HepG2 (cell line): ENCODE measurements at regions of chr13 and their contacts with region 1.

Region 1: DNA sequence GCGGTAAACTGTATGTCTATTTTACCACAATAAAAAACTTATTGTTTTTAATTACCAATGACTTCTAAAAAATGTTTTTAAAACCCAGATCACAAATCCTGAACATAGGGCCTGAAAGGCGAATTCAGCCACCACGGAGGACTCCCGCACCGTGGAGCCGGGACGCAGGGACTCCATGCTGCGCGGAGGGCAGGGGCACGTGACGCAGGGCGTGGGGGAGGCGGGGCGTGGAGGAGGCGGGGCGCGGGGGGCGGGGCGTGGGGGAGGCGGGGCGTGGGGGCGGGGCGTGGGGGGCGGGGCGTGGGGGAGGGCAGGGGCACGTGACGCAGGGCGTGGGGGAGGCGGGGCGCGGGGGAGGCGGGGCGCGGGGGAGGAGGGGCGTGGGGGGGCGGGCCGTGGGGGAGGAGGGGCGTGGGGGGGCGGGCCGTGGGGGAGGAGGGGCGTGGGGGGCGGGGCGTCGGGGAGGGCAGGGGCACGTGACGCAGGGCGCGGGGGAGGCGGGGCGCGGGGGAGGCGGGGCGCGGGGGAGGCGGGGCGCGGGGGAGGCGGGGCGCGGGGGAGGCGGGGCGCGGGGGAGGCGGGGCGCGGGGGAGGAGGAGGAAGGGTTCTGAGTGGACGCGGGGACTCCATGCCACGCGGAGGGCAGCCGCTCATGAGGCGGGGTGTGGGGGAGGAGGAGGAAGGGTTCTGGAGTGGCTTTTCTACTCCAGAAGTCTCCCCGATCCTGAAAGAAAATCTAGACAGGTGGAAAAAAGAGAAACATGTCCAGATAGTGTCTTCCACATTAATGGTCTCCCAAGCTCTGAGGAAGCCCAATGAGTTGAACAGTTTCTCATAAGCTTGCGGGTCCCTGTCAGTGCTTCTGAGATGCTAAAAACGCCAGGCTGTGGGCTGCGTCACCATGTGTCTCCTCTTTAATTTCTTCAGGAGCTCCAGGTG is 4.4 kb upstream of the PROZ start:
- DNase-seq: peak; percentile 49
- ATAC-seq: peak; percentile 30; the same call in 2 of the 3 replicates
- H3K4me3 ChIP-seq: peak overlapping the region; percentile 69 to 81 (median 76)
- H3K27ac ChIP-seq: peak overlapping the region; percentile 92
- H3K4me1 ChIP-seq: peaks cover 92% of the 10 kb centered on the region
- H3K27me3 ChIP-seq: no peaks in the 10 kb centered on the region
- CTCF ChIP-seq: no peak
- EP300 ChIP-seq: no peak
- POLR2A ChIP-seq: peak in 1 of 2 experiments; percentile 88; a peak in 2 of 4 replicates
- RAD21 ChIP-seq: no peak

Region 2: DNA sequence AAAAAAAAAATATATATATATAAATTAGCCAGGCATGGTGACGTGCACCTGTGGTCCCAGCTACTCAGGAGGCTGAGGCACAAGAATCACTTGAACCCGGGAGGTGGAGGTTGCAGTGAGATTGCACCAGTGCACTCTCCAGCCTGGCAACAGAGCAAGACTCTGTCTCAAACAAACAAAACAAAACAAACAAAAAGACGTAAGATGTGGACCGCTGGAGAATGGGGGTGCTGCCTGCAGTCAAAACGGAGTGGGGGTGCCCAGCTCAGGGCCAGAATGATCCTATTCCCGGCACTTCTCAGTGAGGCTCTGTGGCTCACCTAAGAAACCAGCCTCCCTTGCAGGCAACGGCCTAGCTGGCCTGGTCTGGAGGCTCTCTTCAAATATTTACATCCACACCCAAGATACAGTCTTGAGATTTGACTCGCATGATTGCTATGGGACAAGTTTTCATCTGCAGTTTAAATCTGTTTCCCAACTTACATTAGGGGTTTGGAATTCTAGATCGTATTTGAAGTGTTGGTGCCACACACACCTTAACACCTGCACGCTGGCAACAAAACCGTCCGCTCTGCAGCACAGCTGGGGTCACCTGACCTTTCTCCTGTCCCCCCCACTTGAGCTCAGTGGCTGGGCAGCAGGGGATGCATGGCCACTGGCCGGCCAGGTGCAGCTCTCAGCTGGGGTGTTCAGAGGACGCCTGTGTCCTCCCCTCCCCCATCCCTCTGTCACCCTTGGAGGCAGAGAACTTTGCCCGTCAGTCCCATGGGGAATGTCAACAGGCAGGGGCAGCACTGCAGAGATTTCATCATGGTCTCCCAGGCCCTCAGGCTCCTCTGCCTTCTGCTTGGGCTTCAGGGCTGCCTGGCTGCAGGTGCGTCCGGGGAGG is 48.8 kb before region 1 on chr13 and contains the start of gene F7:
- CTCF ChIA-PET with region 1: no interaction called
- POLR2A ChIA-PET with region 1: interaction called, 11 read pairs
- in situ Hi-C with region 1: no loop called
- intact Hi-C with region 1: no loop called
- DNase-seq: peak; percentile 91
- ATAC-seq: peak; percentile 88
- H3K4me3 ChIP-seq: peak within 1 kb of the TSS; percentile 60 to 76 (median 75)
- H3K27ac ChIP-seq: peak within 1 kb of the TSS; percentile 98
- H3K4me1 ChIP-seq: peaks cover 39% of the 10 kb centered on the region
- H3K27me3 ChIP-seq: no peaks in the 10 kb centered on the region
- CTCF ChIP-seq: peak; percentile 43
- EP300 ChIP-seq: peak; percentile 85; a peak in 3 of 4 replicates
- POLR2A ChIP-seq: peak; percentile 74 to 79
- RAD21 ChIP-seq: peak; percentile 54; the same call in 1 of the 2 replicates
- total RNA-seq, gene F7: 7.2 and 12.6 TPM in 2 replicates

Region 3: DNA sequence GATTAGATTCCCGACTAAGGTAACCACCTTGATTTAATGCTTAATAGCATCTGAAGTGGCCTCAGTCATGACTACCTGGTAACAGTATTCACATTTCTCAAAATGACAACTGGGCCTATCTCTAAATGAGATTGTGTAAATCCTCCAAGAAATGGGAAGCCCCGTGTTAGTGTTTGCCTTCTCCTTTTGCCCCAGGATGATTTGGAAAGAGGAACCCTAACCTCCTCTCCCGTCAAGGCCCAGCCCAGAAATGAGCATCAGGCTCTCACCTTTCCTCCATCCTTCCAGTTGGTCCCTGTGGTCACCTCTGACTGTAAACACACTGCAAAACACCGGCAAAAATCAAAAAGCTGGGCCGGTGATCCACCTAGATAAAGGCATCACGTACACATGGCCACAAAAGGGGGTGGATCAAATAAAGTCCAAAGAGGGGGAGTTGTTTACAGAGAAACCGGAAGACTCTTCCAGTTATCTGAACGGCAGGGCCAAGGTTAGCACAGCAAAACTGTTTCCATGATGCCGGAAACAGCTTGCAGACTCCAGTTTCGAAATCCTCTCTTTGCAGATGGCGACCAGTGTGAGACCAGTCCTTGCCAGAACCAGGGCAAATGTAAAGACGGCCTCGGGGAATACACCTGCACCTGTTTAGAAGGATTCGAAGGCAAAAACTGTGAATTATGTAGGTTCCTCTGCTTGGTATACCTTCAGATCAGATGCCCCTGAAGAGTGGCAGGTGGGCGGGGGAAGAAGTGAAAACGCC is 15.1 kb before region 1 on chr13:
- CTCF ChIA-PET with region 1: no interaction called
- POLR2A ChIA-PET with region 1: interaction called, 10 read pairs
- in situ Hi-C with region 1: no loop called
- intact Hi-C with region 1: loop called (anchors 1 kb)
- DNase-seq: peak; percentile 97
- ATAC-seq: peak; percentile 95
- H3K4me3 ChIP-seq: peak overlapping the region in 2 of 3 experiments; percentile 5 to 29; a peak in 1 of 6 replicates
- H3K27ac ChIP-seq: peak overlapping the region; percentile 72
- H3K4me1 ChIP-seq: peaks cover 49% of the 10 kb centered on the region
- H3K27me3 ChIP-seq: no peaks in the 10 kb centered on the region
- CTCF ChIP-seq: peak; percentile 18; the same call in 1 of the 2 replicates
- EP300 ChIP-seq: peak; percentile 67 to 95; a peak in 2 of 4 replicates
- POLR2A ChIP-seq: peak in 1 of 2 experiments; percentile 43; a peak in 1 of 4 replicates
- RAD21 ChIP-seq: 0 out of 2 replicates have a peak, but pooled peaks have one; percentile 23

Region 4: DNA sequence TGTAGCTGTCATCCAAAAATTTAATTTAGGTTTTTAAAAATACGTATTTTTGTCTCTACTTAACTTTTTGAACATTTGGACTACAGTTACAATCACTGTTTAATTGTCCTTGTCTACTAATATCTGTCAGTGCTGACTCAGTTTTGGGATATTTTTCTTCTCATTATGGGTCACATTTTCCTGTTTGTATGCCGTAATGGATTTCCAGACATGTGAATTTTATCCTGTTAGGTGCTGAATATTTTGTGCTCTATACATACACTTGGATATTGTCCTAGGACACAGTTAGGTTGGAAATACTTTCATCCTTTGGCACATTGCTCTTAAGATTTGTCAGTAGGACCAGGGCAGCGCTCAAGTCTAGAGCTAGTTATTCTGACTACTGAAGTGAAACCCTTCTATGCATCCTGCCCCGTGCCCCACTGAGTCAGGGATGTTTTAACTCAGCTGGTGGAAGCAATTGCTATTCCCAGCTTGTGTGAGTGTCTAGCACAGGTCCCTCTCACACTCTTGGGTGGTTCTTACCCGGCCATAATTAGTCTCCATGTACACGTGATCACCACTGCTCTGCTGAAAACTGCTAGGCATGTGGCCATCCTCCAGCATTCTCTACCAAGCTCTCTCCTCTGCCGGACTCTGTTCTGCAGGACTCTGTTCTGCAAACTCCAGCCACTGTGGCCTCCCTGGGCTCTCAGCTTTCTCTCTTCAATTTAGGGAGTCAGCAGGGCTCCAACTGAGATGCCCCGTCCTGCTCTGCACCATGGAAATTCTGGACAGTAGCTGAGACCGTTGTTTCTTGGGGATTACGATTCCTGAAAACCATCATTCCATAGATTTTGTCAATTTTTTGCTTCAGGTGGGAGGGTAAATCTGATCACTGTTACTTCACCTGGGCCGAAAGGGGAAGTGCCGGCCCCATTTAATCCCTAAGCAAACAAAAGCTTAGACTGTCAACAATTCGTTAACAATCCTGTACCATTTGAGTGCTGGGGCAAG is 15.5 kb after region 1 on chr13:
- CTCF ChIA-PET with region 1: no interaction called
- POLR2A ChIA-PET with region 1: interaction called, 11 read pairs
- in situ Hi-C with region 1: no loop called
- intact Hi-C with region 1: no loop called
- DNase-seq: peak; percentile 83
- ATAC-seq: peak; percentile 91
- H3K4me3 ChIP-seq: peak overlapping the region in 2 of 3 experiments; percentile 28 to 45; a peak in 2 of 6 replicates
- H3K27ac ChIP-seq: peak overlapping the region; percentile 73
- H3K4me1 ChIP-seq: peaks cover 39% of the 10 kb centered on the region
- H3K27me3 ChIP-seq: no peaks in the 10 kb centered on the region
- CTCF ChIP-seq: no peak
- EP300 ChIP-seq: peak in 1 of 2 experiments; percentile 81; a peak in 1 of 4 replicates
- POLR2A ChIP-seq: peak; percentile 33 to 41; a peak in 2 of 4 replicates
- RAD21 ChIP-seq: no peak

Region 5: GRCh38 chr13:113208424-113209335 is 54.6 kb after region 1 on chr13 and contains the start of gene PCID2:
- CTCF ChIA-PET with region 1: no interaction called
- POLR2A ChIA-PET with region 1: interaction called, 21 read pairs
- in situ Hi-C with region 1: no loop called
- intact Hi-C with region 1: loop called (anchors 5 kb)
- DNase-seq: peak; percentile 82
- ATAC-seq: peak; percentile 86
- H3K4me3 ChIP-seq: peak within 1 kb of the TSS; percentile 83 to 96 (median 85)
- H3K27ac ChIP-seq: peak within 1 kb of the TSS; percentile 92
- H3K4me1 ChIP-seq: peaks cover 71% of the 10 kb centered on the region
- H3K27me3 ChIP-seq: no peaks in the 10 kb centered on the region
- CTCF ChIP-seq: peak; percentile 52
- EP300 ChIP-seq: peak; percentile 29 to 59; a peak in 1 of 4 replicates
- POLR2A ChIP-seq: peak in 1 of 2 experiments; percentile 83; a peak in 2 of 4 replicates
- RAD21 ChIP-seq: peak; percentile 54; the same call in 1 of the 2 replicates
- total RNA-seq, gene PCID2: 65.0 and 76.4 TPM in 2 replicates